A549 (cell line): ENCODE measurements at regions of chr16 and their contacts with region 1.

Region 1: GRCh38 chr16:1182316-1182671 is 29.4 kb downstream of the CACNA1H start:
- DNase-seq: peak; percentile 57 to 83
- ATAC-seq: peak; percentile 58 to 79
- H3K4me3 ChIP-seq: peak overlapping the region; percentile 36; the same call in 2 of the 3 replicates
- H3K27ac ChIP-seq: peak overlapping the region; percentile 97 to 100
- H3K4me1 ChIP-seq: peaks cover 49% of the 10 kb centered on the region
- CTCF ChIP-seq: no peak
- EP300 ChIP-seq: peak; percentile 13 to 33; a peak in 2 of 5 replicates
- POLR2A ChIP-seq: no peak
- RAD21 ChIP-seq: peak in 1 of 2 experiments; percentile 21; a peak in 1 of 5 replicates

Region 2: DNA sequence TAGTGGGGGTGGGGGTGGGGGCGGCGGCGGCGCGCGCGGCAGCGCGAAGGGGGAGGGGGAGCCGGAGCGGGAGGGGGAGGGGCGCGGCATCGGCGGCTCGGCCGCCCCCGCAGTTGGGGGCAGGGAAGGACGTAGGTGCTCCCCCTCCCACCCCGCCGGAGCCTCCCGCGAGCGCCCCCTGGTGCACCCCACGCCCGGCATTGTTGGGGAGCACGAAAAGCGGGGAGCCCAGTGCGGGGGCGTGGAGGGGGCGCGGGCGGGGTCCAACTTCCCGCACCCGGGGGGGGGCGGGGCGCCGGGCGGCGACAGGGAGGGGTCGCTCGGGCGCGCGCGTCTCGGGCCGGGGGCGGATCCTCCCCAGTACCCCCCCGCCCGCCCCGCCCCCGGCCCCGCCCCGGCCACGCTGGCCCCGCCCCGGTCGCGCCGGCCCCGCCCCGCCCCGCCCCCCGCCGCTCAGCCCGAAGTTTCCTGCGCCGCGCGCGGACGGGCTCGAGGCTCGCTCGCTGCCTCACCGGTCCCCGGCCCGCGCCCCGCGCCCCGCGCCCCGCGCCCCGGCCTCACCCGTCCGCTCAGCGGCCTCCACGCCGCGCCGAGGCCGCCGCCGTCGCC is 29.5 kb before region 1 on chr16 and contains the start of gene CACNA1H:
- CTCF ChIA-PET with region 1: interaction called, 15 read pairs
- POLR2A ChIA-PET with region 1: no interaction called
- DNase-seq: peak in 1 of 2 experiments; percentile 58
- ATAC-seq: peak in 1 of 2 experiments; percentile 17; a peak in 1 of 6 replicates
- H3K4me3 ChIP-seq: peak within 1 kb of the TSS; percentile 53
- H3K27ac ChIP-seq: peak within 1 kb of the TSS; percentile 87 to 96
- H3K4me1 ChIP-seq: peaks cover 36% of the 10 kb centered on the region
- CTCF ChIP-seq: peak; percentile 74
- EP300 ChIP-seq: no peak
- POLR2A ChIP-seq: peak; percentile 22; the same call in 1 of the 2 replicates
- RAD21 ChIP-seq: 0 out of 5 replicates have a peak, but pooled peaks of 1 of the 2 experiments have one; percentile 19
- polyA plus RNA-seq, gene CACNA1H: 7.2 and 8.6 TPM in 2 replicates

Region 3: GRCh38 chr16:1163567-1164055 is 18.7 kb before region 1 on chr16:
- CTCF ChIA-PET with region 1: interaction called, 12 read pairs
- POLR2A ChIA-PET with region 1: no interaction called
- DNase-seq: no peak
- ATAC-seq: peak; percentile 11 to 71; a peak in 3 of 6 replicates
- H3K4me3 ChIP-seq: no peak overlapping the region
- H3K27ac ChIP-seq: peak overlapping the region in 1 of 2 experiments; percentile 72; a peak in 4 of 6 replicates
- H3K4me1 ChIP-seq: peaks cover 28% of the 10 kb centered on the region
- CTCF ChIP-seq: no peak
- EP300 ChIP-seq: no peak
- POLR2A ChIP-seq: no peak
- RAD21 ChIP-seq: no peak

Region 4: GRCh38 chr16:1169285-1170075 is 12.8 kb before region 1 on chr16:
- CTCF ChIA-PET with region 1: interaction called, 30 read pairs
- POLR2A ChIA-PET with region 1: no interaction called
- DNase-seq: no peak
- ATAC-seq: no peak
- H3K4me3 ChIP-seq: no peak overlapping the region
- H3K27ac ChIP-seq: no peak overlapping the region
- H3K4me1 ChIP-seq: peaks cover 16% of the 10 kb centered on the region
- CTCF ChIP-seq: no peak
- EP300 ChIP-seq: no peak
- POLR2A ChIP-seq: no peak
- RAD21 ChIP-seq: no peak

Region 5: GRCh38 chr16:1216296-1216619 is 34.0 kb after region 1 on chr16:
- CTCF ChIA-PET with region 1: no interaction called
- POLR2A ChIA-PET with region 1: no interaction called
- DNase-seq: no peak
- ATAC-seq: no peak
- H3K4me3 ChIP-seq: no peak overlapping the region
- H3K27ac ChIP-seq: no peak overlapping the region
- H3K4me1 ChIP-seq: peaks cover 2% of the 10 kb centered on the region; the same call in 1 of the 3 replicates
- CTCF ChIP-seq: no peak
- EP300 ChIP-seq: no peak
- POLR2A ChIP-seq: no peak
- RAD21 ChIP-seq: no peak